ENCODE measurements at regions of chr4 and their contacts with region 1.

Region 1: DNA sequence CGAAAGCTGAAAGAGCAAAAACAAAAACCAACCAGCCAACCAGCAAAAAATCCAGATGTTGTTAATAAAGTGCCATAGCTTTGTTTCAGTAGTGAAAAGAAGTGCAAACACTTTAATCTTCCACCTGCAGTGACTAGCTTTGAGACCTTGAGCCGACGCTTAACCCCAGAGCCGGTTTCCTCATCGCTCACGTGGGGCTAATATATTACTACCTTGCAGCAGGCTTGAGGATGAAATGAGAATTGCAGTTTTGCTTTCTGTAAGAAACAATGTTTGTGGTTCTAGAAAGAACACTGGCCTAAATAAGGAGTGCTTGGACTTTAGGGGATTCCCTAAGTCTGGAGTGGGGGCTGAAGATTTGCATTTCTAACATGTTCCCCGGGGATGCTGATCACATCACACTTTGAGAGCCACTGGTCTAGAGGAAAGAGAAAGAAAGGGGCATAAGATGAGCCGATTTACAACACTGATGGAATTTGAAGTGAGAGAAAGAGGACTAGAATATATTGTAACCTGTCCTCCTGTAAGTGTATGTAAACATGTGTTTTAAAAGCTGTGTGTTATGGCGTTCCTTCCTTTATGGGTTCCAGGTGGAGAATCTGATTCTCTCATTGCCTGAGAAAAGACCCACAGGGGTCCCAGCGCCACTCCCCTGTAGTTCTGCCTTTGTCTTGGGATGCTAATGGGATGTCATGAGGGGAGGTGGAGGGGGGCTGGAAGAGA is 1.4 kb downstream of the FGF2 start:
- DNase-seq: peak; percentile 69 to 70
- H3K4me3 ChIP-seq: peak overlapping the region; percentile 79 to 98 (median 90)
- H3K27ac ChIP-seq: peak overlapping the region; percentile 94
- H3K4me1 ChIP-seq: peaks cover 5 to 27% (median 22%) of the 10 kb centered on the region in 4 experiments
- H3K27me3 ChIP-seq: no peaks in the 10 kb centered on the region
- CTCF ChIP-seq: peak in 2 of 3 experiments; percentile 9 to 14; a peak in 2 of 4 replicates
- EP300 ChIP-seq: peak in 1 of 2 experiments; percentile 58; a peak in 2 of 3 replicates
- POLR2A ChIP-seq: peak; percentile 62 to 72
- RAD21 ChIP-seq: no peak; a peak in 1 of 4 replicates

Region 2: GRCh38 chr4:122632396-122633143 is 195.5 kb before region 1 on chr4:
- CTCF ChIA-PET with region 1: no interaction called
- POLR2A ChIA-PET with region 1: no interaction called
- DNase-seq: no peak
- H3K4me3 ChIP-seq: no peak overlapping the region
- H3K27ac ChIP-seq: no peak overlapping the region
- H3K4me1 ChIP-seq: no peaks in the 10 kb centered on the region
- H3K27me3 ChIP-seq: no peaks in the 10 kb centered on the region
- CTCF ChIP-seq: no peak
- EP300 ChIP-seq: no peak
- POLR2A ChIP-seq: no peak
- RAD21 ChIP-seq: no peak

Region 3: DNA sequence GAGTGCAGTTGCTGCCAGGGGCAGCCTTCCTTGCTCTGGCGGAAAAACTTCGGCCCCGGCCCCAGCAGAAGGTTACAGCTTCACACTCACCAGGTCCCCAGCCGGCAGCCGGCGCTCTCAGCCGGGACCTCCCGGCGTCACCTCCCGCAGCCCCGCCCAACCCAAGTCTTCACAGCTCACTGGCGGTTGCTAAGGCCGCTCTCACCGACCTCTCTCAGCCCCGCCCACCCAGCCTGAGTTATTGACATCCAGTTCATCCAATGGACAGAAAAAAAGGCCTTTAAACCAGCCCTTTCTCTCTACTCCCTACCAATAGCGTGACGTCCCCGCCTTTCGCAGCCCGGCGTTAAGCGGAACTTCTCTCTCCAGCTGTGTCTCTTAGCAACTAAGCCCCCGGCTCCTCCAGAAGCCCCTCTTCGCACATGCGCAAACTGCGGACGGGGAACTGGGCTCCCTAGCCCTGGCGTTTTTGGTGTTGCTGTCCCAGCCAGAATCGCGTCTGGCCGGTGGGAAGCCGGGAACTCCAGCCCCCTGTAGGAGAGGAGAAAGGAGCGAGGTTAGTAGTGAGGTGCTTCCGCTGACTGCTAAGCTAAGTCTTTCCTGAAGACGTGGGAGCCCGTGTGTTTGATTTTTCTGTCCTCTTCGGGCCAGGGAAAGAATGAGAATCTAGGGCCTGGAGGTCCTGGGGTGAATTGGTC is 95.6 kb before region 1 on chr4 and contains the start of gene BBS12:
- CTCF ChIA-PET with region 1: no interaction called
- POLR2A ChIA-PET with region 1: interaction called, 17 read pairs
- DNase-seq: peak; percentile 99
- H3K4me3 ChIP-seq: peak within 1 kb of the TSS; percentile 54 to 77 (median 74)
- H3K27ac ChIP-seq: peak within 1 kb of the TSS; percentile 76
- H3K4me1 ChIP-seq: peaks cover 0 to 10% (median 0%) of the 10 kb centered on the region in 4 experiments; a peak in 2 of 7 replicates
- H3K27me3 ChIP-seq: no peaks in the 10 kb centered on the region
- CTCF ChIP-seq: peak in 2 of 3 experiments; percentile 16 to 22; a peak in 2 of 4 replicates
- EP300 ChIP-seq: no peak
- POLR2A ChIP-seq: peak in 1 of 2 experiments; percentile 67; a peak in 2 of 3 replicates
- RAD21 ChIP-seq: peak; percentile 29 to 56
- total RNA-seq, gene BBS12: 2.6 TPM in 2 replicates

Region 4: GRCh38 chr4:122764821-122765215 is 63.2 kb before region 1 on chr4:
- CTCF ChIA-PET with region 1: interaction called, 21 read pairs
- POLR2A ChIA-PET with region 1: interaction called, 12 read pairs
- DNase-seq: no peak
- H3K4me3 ChIP-seq: no peak overlapping the region
- H3K27ac ChIP-seq: no peak overlapping the region
- H3K4me1 ChIP-seq: peaks cover 0 to 5% (median 4%) of the 10 kb centered on the region in 4 experiments; a peak in 3 of 7 replicates
- H3K27me3 ChIP-seq: peaks cover 0 to 1% (median 0%) of the 10 kb centered on the region in 4 experiments; a peak in 1 of 7 replicates
- CTCF ChIP-seq: no peak
- EP300 ChIP-seq: no peak
- POLR2A ChIP-seq: no peak
- RAD21 ChIP-seq: no peak

Region 5: GRCh38 chr4:122788935-122789334 is 39.1 kb before region 1 on chr4:
- CTCF ChIA-PET with region 1: interaction called, 3 read pairs
- POLR2A ChIA-PET with region 1: interaction called, 54 read pairs
- DNase-seq: no peak
- H3K4me3 ChIP-seq: peak overlapping the region in 1 of 4 experiments; percentile 14; a peak in 1 of 8 replicates
- H3K27ac ChIP-seq: no peak overlapping the region
- H3K4me1 ChIP-seq: peaks cover 4 to 9% (median 8%) of the 10 kb centered on the region in 4 experiments
- H3K27me3 ChIP-seq: no peaks in the 10 kb centered on the region
- CTCF ChIP-seq: no peak
- EP300 ChIP-seq: no peak
- POLR2A ChIP-seq: no peak
- RAD21 ChIP-seq: no peak

Region 6: GRCh38 chr4:122814426-122814825 is 13.6 kb before region 1 on chr4:
- CTCF ChIA-PET with region 1: interaction called, 5 read pairs
- POLR2A ChIA-PET with region 1: interaction called, 10 read pairs
- DNase-seq: no peak
- H3K4me3 ChIP-seq: no peak overlapping the region
- H3K27ac ChIP-seq: no peak overlapping the region
- H3K4me1 ChIP-seq: no peaks in the 10 kb centered on the region
- H3K27me3 ChIP-seq: no peaks in the 10 kb centered on the region
- CTCF ChIP-seq: no peak
- EP300 ChIP-seq: no peak
- POLR2A ChIP-seq: no peak
- RAD21 ChIP-seq: no peak

Region 7: DNA sequence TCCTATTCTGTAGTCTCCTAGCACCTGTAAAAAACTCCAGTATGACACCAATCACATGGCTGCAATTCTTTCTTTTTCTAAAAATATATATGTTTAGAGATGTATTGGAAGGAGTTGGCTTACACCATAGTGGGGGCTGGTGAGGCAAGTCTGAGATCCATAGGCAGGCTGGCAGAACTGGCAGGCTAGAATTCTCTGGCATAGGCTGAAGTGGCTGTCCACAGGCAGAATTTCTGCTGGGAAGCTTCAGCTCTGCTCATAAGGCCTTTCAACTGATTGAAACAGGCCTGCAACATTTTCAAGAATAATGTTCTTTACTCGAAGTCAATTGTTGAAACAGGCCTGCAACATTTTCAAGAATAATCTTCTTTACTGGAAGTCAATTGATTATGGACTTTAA is 35.6 kb after region 1 on chr4:
- CTCF ChIA-PET with region 1: interaction called, 4 read pairs
- POLR2A ChIA-PET with region 1: interaction called, 11 read pairs
- DNase-seq: no peak
- H3K4me3 ChIP-seq: no peak overlapping the region
- H3K27ac ChIP-seq: no peak overlapping the region
- H3K4me1 ChIP-seq: peaks cover 0 to 10% (median 1%) of the 10 kb centered on the region in 4 experiments; a peak in 3 of 7 replicates
- H3K27me3 ChIP-seq: no peaks in the 10 kb centered on the region
- CTCF ChIP-seq: no peak
- EP300 ChIP-seq: no peak
- POLR2A ChIP-seq: no peak
- RAD21 ChIP-seq: no peak

Region 8: DNA sequence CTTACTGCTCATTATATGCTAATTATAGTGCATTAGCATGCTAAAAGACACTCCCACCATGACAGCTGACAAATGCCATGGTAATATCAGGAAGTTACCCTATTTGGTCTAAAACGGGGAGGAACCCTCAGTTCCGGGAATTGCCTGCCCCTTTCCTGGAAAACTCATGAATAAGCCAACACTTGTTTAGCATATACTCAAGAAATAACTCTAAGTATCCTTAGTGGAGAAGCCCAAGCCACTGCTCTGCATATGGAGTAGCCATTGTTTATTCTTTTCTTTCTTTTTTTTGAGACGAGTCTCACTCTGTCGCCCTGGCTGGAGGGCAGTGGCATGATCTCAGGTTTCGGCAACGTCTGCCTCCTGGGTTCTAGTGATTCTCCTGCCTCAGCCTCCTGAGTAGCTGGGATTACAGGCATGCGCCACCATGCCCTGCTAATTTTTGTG is 78.8 kb after region 1 on chr4:
- CTCF ChIA-PET with region 1: no interaction called
- POLR2A ChIA-PET with region 1: no interaction called
- DNase-seq: no peak
- H3K4me3 ChIP-seq: no peak overlapping the region
- H3K27ac ChIP-seq: no peak overlapping the region
- H3K4me1 ChIP-seq: peaks cover 0 to 9% (median 4%) of the 10 kb centered on the region in 4 experiments; a peak in 3 of 7 replicates
- H3K27me3 ChIP-seq: no peaks in the 10 kb centered on the region
- CTCF ChIP-seq: no peak
- EP300 ChIP-seq: no peak
- POLR2A ChIP-seq: no peak
- RAD21 ChIP-seq: no peak

Region 9: GRCh38 chr4:123017636-123018395 is 189.8 kb after region 1 on chr4:
- CTCF ChIA-PET with region 1: no interaction called
- POLR2A ChIA-PET with region 1: no interaction called
- DNase-seq: no peak
- H3K4me3 ChIP-seq: no peak overlapping the region
- H3K27ac ChIP-seq: no peak overlapping the region
- H3K4me1 ChIP-seq: no peaks in the 10 kb centered on the region
- H3K27me3 ChIP-seq: no peaks in the 10 kb centered on the region
- CTCF ChIP-seq: no peak
- EP300 ChIP-seq: no peak
- POLR2A ChIP-seq: no peak
- RAD21 ChIP-seq: no peak